PC-9 (cell line): ENCODE measurements at regions of chr11 and their contacts with region 1.

Region 1: GRCh38 chr11:83249972-83250593 is 36.1 kb downstream of the CCDC90B start:
- DNase-seq: peak in 1 of 2 experiments; percentile 59
- H3K4me3 ChIP-seq: no peak overlapping the region
- H3K27ac ChIP-seq: no peak overlapping the region
- H3K4me1 ChIP-seq: peaks cover 1% of the 10 kb centered on the region
- H3K27me3 ChIP-seq: no peaks in the 10 kb centered on the region
- CTCF ChIP-seq: peak; percentile 83

Region 2: DNA sequence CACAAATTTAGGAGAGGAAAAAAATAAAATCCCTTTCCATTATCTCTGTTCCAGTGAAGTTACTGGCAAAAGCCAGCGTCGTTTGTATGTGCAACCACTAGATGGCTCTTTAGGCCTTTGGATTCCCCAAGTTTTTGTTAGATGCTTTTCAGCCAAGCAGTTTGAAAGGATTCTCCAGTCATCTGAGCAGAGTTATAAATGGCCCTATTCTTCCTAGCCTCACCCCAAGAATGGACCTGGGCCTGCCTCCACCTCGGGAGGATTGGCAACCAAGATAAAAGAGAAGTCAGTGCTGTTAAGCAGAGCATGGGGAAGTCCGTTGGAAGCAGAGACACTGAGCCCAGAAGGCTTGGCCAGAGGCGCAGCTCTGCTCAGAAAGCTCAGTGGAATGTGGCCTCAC is 531.8 kb before region 1 on chr11:
- CTCF ChIA-PET with region 1: no interaction called
- POLR2A ChIA-PET with region 1: no interaction called
- intact Hi-C with region 1: loop called (anchors 5 kb)
- DNase-seq: peak; percentile 32 to 53
- H3K4me3 ChIP-seq: no peak overlapping the region
- H3K27ac ChIP-seq: no peak overlapping the region
- H3K4me1 ChIP-seq: no peaks in the 10 kb centered on the region
- H3K27me3 ChIP-seq: peaks cover 7% of the 10 kb centered on the region; the same call in 1 of the 2 replicates
- CTCF ChIP-seq: peak; percentile 92

Region 3: GRCh38 chr11:83275888-83276641 is 26.0 kb after region 1 on chr11:
- CTCF ChIA-PET with region 1: no interaction called
- POLR2A ChIA-PET with region 1: no interaction called
- intact Hi-C with region 1: no loop called
- DNase-seq: no peak
- H3K4me3 ChIP-seq: no peak overlapping the region
- H3K27ac ChIP-seq: no peak overlapping the region
- H3K4me1 ChIP-seq: no peaks in the 10 kb centered on the region
- H3K27me3 ChIP-seq: no peaks in the 10 kb centered on the region
- CTCF ChIP-seq: no peak